ENCODE measurements at regions of chr2 and their contacts with region 1.

Region 1: DNA sequence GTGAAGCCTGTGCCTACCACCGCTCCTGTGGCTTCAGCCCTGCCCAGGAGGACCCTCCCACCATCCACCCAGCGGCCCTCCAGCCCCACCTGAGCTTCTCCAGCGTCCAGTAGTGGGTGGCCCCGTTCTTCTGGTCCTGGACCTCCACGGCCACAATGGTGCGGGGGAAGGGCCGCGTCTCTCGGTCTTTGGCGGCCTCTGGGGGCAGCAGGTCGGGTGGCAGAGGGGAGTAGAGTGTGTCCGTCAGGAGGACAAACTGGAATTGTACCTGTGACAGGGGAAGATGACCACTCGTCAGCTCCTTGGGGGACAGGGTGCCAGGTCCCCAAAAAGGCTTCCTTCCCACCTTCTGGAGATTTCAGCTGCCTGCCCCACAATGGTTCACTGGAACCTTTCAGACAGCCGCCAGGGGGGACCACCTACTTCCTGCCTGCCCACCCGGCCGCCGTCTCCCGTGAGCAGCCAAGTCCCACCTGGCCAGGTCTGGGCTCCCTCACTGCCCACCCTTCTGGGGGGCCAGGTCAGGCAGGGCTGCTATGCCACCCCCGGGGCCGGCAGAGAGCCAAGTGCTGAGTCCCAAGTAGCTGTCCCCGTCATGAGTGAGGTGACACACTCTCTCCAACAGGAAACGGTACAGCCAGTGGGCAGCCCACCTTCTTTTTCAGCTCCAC is 59.3 kb downstream of the KIF1A start:
- DNase-seq: no peak
- H3K4me3 ChIP-seq: no peak overlapping the region
- H3K27ac ChIP-seq: no peak overlapping the region
- H3K4me1 ChIP-seq: no peaks in the 10 kb centered on the region
- H3K27me3 ChIP-seq: no peaks in the 10 kb centered on the region
- CTCF ChIP-seq: no peak
- POLR2A ChIP-seq: no peak

Region 2: GRCh38 chr2:239193925-239194677 is 1566.6 kb before region 1 on chr2:
- intact Hi-C with region 1: loop called (anchors 5 kb)
- DNase-seq: peak in 1 of 2 donors; percentile 19
- H3K4me3 ChIP-seq: no peak overlapping the region
- H3K27ac ChIP-seq: no peak overlapping the region
- H3K4me1 ChIP-seq: no peaks in the 10 kb centered on the region
- H3K27me3 ChIP-seq: no peaks in the 10 kb centered on the region
- CTCF ChIP-seq: no peak
- POLR2A ChIP-seq: no peak

Region 3: GRCh38 chr2:240032406-240033329 is 728.0 kb before region 1 on chr2:
- intact Hi-C with region 1: no loop called
- DNase-seq: no peak
- H3K4me3 ChIP-seq: no peak overlapping the region
- H3K27ac ChIP-seq: no peak overlapping the region
- H3K4me1 ChIP-seq: no peaks in the 10 kb centered on the region
- H3K27me3 ChIP-seq: peaks cover 0 to 14% of the 10 kb centered on the region in 2 donors
- CTCF ChIP-seq: no peak
- POLR2A ChIP-seq: no peak